ENCODE measurements at regions of chr14 and their contacts with region 1.

Region 1: DNA sequence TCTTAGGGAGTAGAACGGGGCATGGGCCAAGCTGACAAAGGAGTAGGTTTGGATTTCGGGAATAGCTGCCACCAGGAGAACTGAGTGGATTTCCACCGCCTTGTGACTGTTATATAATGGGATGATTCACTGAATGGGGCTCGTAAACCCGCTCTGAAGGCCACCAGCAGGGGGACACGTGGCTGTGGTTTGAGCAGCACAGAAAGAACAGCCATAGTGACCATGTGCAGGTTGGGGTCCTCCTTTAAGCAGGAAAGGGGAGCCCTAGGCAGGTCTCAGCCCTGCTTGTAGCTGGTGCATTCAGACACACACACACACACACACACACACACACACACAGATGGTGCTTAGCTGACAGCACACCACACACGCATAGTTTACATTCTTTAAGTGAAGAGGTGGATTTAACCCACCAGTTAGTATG is 8.6 kb upstream of the ASB2 start:
- DNase-seq: peak; percentile 60
- ATAC-seq: peak; percentile 87
- H3K4me3 ChIP-seq: no peak overlapping the region
- H3K27ac ChIP-seq: no peak overlapping the region
- H3K4me1 ChIP-seq: peaks cover 15 to 29% of the 10 kb centered on the region in 2 experiments; a peak in 3 of 4 replicates
- H3K27me3 ChIP-seq: no peaks in the 10 kb centered on the region
- CTCF ChIP-seq: peak; percentile 27 to 72 (median 64); a peak in 5 of 6 replicates
- POLR2A ChIP-seq: no peak
- RAD21 ChIP-seq: peak; percentile 39; the same call in 1 of the 2 replicates

Region 2: DNA sequence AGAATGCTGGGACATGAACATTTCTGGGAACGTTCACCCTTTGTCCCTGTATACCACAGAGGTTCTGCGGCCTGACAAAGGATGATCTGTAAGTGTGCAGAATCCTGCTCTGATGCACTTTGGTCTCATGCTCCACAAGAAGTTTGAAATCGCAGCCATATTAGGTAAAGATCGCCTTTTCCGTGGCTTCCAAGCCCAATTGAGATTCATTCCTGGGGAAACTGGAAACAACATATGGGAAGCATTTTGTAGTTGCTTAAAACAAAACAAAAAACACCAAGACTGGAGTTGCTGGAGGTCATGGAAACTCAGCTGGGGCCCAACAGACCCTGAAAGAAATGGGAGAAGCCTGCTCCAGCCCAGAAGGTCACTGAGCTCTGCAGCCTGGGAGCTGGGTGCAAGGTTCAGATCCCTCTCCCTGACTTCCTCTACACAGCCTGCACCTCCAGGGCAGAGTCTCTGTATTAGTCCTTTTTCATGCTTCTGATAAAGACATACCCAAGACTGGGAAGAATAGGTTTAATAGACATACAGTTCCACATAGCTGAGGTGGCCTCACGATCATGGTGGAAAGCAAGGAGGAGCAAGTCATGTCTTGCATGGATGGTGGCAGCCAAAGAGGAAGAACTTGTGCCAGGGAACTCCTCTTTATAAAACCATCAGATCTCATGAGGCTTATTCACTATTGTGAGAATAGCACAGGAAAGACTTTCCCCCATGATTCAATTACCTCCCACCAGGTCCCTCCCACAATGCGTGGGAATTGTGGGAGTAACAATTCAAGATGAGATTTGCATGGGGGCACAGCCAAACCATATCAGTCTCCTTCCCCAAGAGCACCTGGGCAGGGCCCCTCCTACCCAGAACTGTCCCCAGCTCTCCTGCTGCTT is 1122.9 kb before region 1 on chr14:
- CTCF ChIA-PET with region 1: no interaction called
- POLR2A ChIA-PET with region 1: no interaction called
- RAD21 ChIA-PET with region 1: no interaction called
- intact Hi-C with region 1: no loop called
- DNase-seq: no peak
- ATAC-seq: no peak
- H3K4me3 ChIP-seq: no peak overlapping the region
- H3K27ac ChIP-seq: no peak overlapping the region
- H3K4me1 ChIP-seq: no peaks in the 10 kb centered on the region
- H3K27me3 ChIP-seq: no peaks in the 10 kb centered on the region
- CTCF ChIP-seq: no peak
- POLR2A ChIP-seq: no peak
- RAD21 ChIP-seq: no peak

Region 3: GRCh38 chr14:93970549-93970946 is 14.5 kb before region 1 on chr14:
- CTCF ChIA-PET with region 1: interaction called, 10 read pairs
- POLR2A ChIA-PET with region 1: interaction called, 3 read pairs
- RAD21 ChIA-PET with region 1: no interaction called
- intact Hi-C with region 1: no loop called
- DNase-seq: peak; percentile 33
- ATAC-seq: peak; percentile 98
- H3K4me3 ChIP-seq: no peak overlapping the region
- H3K27ac ChIP-seq: no peak overlapping the region
- H3K4me1 ChIP-seq: peaks cover 0 to 17% of the 10 kb centered on the region in 2 experiments; a peak in 2 of 4 replicates
- H3K27me3 ChIP-seq: no peaks in the 10 kb centered on the region
- CTCF ChIP-seq: peak; percentile 47 to 87 (median 63)
- POLR2A ChIP-seq: no peak
- RAD21 ChIP-seq: peak; percentile 90

Region 4: GRCh38 chr14:94775873-94776208 is 790.8 kb after region 1 on chr14:
- CTCF ChIA-PET with region 1: no interaction called
- POLR2A ChIA-PET with region 1: no interaction called
- RAD21 ChIA-PET with region 1: no interaction called
- intact Hi-C with region 1: no loop called
- DNase-seq: no peak
- ATAC-seq: no peak
- H3K4me3 ChIP-seq: no peak overlapping the region
- H3K27ac ChIP-seq: no peak overlapping the region
- H3K4me1 ChIP-seq: no peaks in the 10 kb centered on the region
- H3K27me3 ChIP-seq: peaks cover 7% of the 10 kb centered on the region; the same call in 1 of the 2 replicates
- CTCF ChIP-seq: no peak
- POLR2A ChIP-seq: no peak
- RAD21 ChIP-seq: no peak